Calu3 (cell line): ENCODE measurements at regions of chr19 and their contacts with region 1.

Region 1: GRCh38 chr19:55672418-55672817 is 2.6 kb upstream of the EPN1 start:
- DNase-seq: no peak
- H3K4me3 Mint-ChIP-seq: no peak overlapping the region
- H3K27ac Mint-ChIP-seq: no peak overlapping the region
- H3K4me1 Mint-ChIP-seq: peaks cover 63% of the 10 kb centered on the region
- H3K27me3 Mint-ChIP-seq: no peaks in the 10 kb centered on the region
- CTCF ChIP-seq: no peak

Region 2: GRCh38 chr19:55653758-55654539 is 18.5 kb before region 1 on chr19:
- CTCF ChIA-PET with region 1: interaction called, 15 read pairs
- intact Hi-C with region 1: loop called (anchors 2 kb)
- DNase-seq: peak; percentile 99
- H3K4me3 Mint-ChIP-seq: peak overlapping the region; percentile 96
- H3K27ac Mint-ChIP-seq: peak overlapping the region; percentile 96
- H3K4me1 Mint-ChIP-seq: peaks cover 10% of the 10 kb centered on the region
- H3K27me3 Mint-ChIP-seq: no peaks in the 10 kb centered on the region
- CTCF ChIP-seq: peak; percentile 100

Region 3: GRCh38 chr19:55691561-55692481 is 19.4 kb after region 1 on chr19:
- CTCF ChIA-PET with region 1: no interaction called
- intact Hi-C with region 1: no loop called
- DNase-seq: no peak
- H3K4me3 Mint-ChIP-seq: no peak overlapping the region
- H3K27ac Mint-ChIP-seq: no peak overlapping the region
- H3K4me1 Mint-ChIP-seq: peaks cover 12% of the 10 kb centered on the region
- H3K27me3 Mint-ChIP-seq: no peaks in the 10 kb centered on the region
- CTCF ChIP-seq: no peak